Heart right ventricle (tissue), 16 donors: ENCODE measurements at regions of chr20 and their contacts with region 1.

Region 1: DNA sequence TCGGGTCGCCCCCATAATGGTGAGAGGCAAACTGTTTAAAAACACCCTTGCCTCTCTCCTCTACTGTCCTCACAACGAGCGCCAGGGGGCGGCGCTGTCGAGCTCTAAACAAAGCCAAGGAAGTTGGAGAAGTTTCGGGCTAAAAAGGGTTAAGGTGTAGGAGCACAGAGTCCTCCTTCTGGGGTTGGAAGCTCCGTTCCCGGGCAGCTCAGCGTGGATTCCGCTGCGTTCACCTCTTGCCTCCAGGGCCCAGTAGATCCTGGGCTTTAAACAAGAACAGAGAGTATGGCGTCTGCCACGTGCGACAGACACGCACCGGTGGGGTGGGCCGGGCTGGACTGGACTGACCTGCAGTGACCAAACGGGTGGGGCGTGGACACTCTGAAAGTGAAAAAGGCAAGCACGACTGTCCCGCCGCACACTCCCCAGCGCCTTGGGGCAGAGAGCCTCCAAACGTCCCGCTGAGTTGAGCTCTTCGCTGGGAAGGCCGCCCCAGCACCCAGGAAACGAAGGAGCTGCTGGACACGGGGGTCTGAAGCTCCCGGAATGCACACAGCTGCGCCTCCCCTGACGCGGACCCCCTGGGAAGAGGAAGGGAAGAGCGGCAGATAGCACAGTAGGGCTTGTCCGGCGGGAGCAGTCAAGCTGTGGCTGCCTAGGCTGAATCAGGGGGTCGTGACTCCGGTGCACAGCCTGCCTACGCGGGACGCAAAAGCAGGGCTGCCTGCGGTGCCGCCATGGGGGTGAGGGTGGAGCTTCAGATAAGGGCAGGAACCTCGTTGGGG is 1.6 kb upstream of the THBD start:
- DNase-seq: peak; percentile 87 to 90
- ATAC-seq: peak; percentile 50 to 82 (median 67)
- H3K4me3 ChIP-seq: peak overlapping the region; percentile 50 to 82 (median 70)
- H3K27ac ChIP-seq: peak overlapping the region; percentile 87 to 97 (median 92)
- H3K4me1 ChIP-seq: peaks cover 6 to 59% (median 50%) of the 10 kb centered on the region in 9 donors
- H3K27me3 ChIP-seq: peaks cover 0 to 54% (median 25%) of the 10 kb centered on the region in 7 donors
- CTCF ChIP-seq: peak; percentile 55 to 87 (median 79)

Region 2: GRCh38 chr20:22729180-22729579 is 321.9 kb before region 1 on chr20:
- intact Hi-C with region 1: loop called in 3 of 10 experiments (anchors 10 kb)
- DNase-seq: no peak
- ATAC-seq: no peak
- H3K4me3 ChIP-seq: no peak overlapping the region
- H3K27ac ChIP-seq: no peak overlapping the region
- H3K4me1 ChIP-seq: peaks cover 0 to 15% (median 4%) of the 10 kb centered on the region in 9 donors
- H3K27me3 ChIP-seq: peaks cover 0 to 9% (median 0%) of the 10 kb centered on the region in 7 donors
- CTCF ChIP-seq: no peak

Region 3: DNA sequence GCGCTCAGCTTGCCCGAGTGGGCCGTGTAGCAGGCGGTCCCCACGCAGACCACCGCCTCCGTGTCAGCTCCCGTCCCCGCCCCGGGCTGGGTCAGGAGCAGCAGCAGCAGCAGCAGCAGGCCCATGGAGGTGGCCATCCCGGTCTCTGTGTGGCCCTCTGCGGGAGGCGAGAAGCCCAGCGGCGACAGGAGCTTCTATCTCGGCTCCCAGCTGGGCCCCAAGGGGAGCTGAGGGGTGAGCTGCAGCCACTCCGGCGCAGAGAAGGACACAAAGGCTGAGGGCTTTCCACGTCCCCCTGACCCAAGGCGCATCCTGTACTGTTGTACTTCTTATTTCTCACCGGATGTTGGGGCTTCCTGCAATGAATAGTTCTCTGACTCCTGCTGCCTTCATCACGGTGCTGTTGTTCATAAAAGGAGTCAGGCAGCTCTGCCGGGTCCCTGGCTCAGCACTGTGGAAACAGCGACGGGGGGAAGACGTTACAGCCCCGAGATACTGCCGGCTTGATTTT is 35.1 kb after region 1 on chr20 and contains the start of gene CD93:
- intact Hi-C with region 1: loop called in 2 of 10 experiments (anchors 2 to 5 kb)
- DNase-seq: peak; percentile 58 to 78
- ATAC-seq: peak; percentile 68 to 82 (median 77)
- H3K4me3 ChIP-seq: peak within 1 kb of the TSS; percentile 47 to 73 (median 58)
- H3K27ac ChIP-seq: peak within 1 kb of the TSS; percentile 91 to 99 (median 97)
- H3K4me1 ChIP-seq: peaks cover 0 to 49% (median 36%) of the 10 kb centered on the region in 9 donors
- H3K27me3 ChIP-seq: no peaks in the 10 kb centered on the region
- CTCF ChIP-seq: no peak
- total RNA-seq, gene CD93: 29.6 to 85.0 (median 40.0) TPM

Region 4: DNA sequence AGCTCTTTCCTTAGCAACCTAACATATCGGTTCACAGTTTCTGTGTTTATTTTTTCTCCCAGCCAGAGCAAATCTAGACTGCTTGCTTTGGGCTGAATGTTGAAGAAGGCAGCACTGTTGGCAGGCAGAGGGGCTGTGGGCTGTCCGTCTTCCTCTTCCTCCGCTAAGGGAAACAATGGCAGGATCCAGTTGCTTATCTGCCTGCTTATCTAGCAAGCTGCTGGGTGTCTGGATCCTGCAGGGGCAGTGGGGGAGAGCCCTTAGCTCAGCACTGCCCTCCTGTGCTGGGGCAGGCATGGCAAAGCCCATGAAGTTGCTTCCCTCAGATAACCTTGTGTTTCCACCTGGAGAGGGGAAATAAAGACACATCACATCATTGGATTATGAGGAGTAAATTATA is 127.8 kb after region 1 on chr20:
- intact Hi-C with region 1: loop called in 1 of 10 experiments (anchors 2 kb)
- DNase-seq: peak; percentile 41 to 65
- ATAC-seq: peak; percentile 45 to 83 (median 74)
- H3K4me3 ChIP-seq: no peak overlapping the region
- H3K27ac ChIP-seq: peak overlapping the region in 8 of 10 donors; percentile 32 to 83 (median 76)
- H3K4me1 ChIP-seq: peaks cover 0 to 50% (median 18%) of the 10 kb centered on the region in 9 donors
- H3K27me3 ChIP-seq: no peaks in the 10 kb centered on the region
- CTCF ChIP-seq: peak in 8 of 9 donors; percentile 44 to 66 (median 52)

Region 5: DNA sequence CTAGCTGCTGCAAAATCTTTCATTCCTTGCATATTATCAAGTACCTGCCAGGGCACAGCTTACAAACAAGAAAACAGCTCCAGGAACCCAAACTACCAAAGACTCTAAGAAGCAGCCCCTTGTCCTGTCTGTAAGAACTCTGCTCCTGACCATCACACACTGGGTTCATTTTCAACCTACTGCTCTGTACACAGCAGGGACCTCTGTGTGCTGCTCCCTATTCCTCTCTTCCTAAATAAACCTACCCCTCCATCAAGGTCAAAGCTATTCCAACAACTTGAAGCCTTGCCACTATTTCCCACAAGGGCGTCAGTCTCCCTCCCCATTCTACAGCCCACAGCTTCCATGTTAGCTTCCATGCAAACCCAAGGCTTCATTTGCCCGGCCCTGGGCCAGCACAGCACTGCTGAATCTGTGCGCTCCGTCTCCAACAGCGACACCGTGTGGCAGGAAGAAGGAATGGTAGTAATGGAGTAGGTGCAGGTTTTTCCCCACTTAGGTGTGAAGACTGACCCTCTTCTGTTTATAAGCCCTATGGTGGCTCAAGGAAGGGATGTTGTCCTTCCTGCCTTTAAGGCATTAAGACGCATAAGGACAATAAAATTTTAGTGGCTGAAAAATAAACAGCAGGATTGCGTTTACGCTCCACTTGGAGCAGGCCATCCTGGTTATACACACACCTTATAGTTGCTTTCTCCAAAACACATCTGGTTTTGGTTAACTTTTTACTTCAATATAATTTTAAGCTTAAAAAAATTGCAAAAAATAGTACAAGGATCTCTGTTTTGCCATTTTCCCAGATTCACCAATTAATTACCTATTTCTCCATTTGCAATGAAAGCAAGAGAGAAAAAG is 184.4 kb after region 1 on chr20:
- intact Hi-C with region 1: loop called in 9 of 10 experiments (anchors 2 to 10 kb)
- DNase-seq: peak; percentile 73 to 77
- ATAC-seq: peak; percentile 88 to 95 (median 92)
- H3K4me3 ChIP-seq: no peak overlapping the region
- H3K27ac ChIP-seq: no peak overlapping the region
- H3K4me1 ChIP-seq: peaks cover 0 to 11% (median 0%) of the 10 kb centered on the region in 9 donors
- H3K27me3 ChIP-seq: no peaks in the 10 kb centered on the region
- CTCF ChIP-seq: peak; percentile 81 to 92 (median 89)

Region 6: DNA sequence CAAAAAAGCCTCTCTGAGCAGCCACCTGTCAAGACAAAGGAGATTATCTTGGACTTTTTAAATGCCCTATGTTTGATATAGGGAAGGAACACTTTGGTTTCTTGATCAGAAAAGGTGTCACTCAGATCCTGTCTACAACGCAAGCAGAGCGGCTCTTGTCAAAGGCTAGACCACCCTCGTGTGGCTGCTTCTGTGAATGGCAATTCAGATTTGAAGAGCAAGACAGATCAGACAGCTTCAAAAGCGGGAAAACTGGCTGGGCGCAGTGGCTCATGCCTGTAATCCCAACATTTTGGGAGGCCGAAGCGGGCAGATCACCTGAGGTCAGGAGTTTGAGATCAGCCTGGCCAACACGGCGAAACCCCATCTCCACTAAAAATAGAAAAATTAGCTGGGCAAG is 289.5 kb after region 1 on chr20:
- intact Hi-C with region 1: loop called in 9 of 10 experiments (anchors 5 to 10 kb)
- DNase-seq: peak; percentile 41 to 80
- ATAC-seq: peak; percentile 68 to 92 (median 88)
- H3K4me3 ChIP-seq: no peak overlapping the region
- H3K27ac ChIP-seq: no peak overlapping the region
- H3K4me1 ChIP-seq: peaks cover 0 to 10% (median 0%) of the 10 kb centered on the region in 9 donors
- H3K27me3 ChIP-seq: no peaks in the 10 kb centered on the region
- CTCF ChIP-seq: peak; percentile 55 to 89 (median 75)

Region 7: GRCh38 chr20:23507346-23507745 is 456.3 kb after region 1 on chr20:
- intact Hi-C with region 1: no loop called
- DNase-seq: no peak
- ATAC-seq: no peak
- H3K4me3 ChIP-seq: no peak overlapping the region
- H3K27ac ChIP-seq: no peak overlapping the region
- H3K4me1 ChIP-seq: no peaks in the 10 kb centered on the region
- H3K27me3 ChIP-seq: peaks cover 0 to 23% (median 8%) of the 10 kb centered on the region in 7 donors
- CTCF ChIP-seq: no peak